ENCODE measurements at regions of chr4 and their contacts with region 1.

Region 1: GRCh38 chr4:76949276-76950051 is at the start of gene SEPTIN11:
- DNase-seq: peak; percentile 93 to 94
- ATAC-seq: peak; percentile 77
- total RNA-seq, gene SEPTIN11: 101 to 135 TPM

Region 2: DNA sequence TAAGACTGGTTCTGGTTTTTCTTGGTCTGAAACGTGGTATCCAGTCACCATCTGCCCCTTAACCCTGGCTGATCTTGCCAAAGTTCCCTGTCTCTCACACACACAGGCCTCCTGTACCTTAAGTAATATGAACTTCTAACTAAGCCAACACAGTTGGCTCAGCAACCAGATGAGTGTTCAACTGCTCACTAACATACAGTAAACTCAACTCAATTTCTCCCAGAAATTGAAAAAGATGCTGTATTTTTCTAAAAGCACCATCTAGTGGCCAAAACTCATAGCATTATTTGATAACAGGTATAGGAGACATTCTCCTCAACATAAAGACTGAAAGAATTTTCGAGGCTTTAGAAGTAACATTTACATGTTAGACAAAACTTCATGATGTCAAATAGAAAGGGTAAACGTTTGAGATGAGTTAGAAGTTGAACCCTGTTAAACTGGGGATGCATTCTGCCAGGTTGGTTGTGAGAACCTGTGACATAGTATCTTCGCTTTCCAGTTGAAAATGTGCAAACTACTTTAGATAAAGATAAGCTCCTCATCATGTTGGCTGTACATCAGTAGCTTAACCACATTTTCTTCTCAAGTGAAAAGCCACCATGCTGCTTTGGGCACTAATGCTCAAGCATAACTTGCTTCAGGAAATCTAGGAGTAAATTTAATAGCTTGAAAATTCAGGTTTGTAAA is 95.1 kb after region 1 on chr4:
- intact Hi-C with region 1: loop called in 1 of 2 experiments (anchors 10 kb)
- DNase-seq: no peak
- ATAC-seq: peak; percentile 41

Measured in left colon (tissue), 2 donors.